HCT116 (cell line): ENCODE measurements at regions of chr9 and their contacts with region 1.

Region 1: DNA sequence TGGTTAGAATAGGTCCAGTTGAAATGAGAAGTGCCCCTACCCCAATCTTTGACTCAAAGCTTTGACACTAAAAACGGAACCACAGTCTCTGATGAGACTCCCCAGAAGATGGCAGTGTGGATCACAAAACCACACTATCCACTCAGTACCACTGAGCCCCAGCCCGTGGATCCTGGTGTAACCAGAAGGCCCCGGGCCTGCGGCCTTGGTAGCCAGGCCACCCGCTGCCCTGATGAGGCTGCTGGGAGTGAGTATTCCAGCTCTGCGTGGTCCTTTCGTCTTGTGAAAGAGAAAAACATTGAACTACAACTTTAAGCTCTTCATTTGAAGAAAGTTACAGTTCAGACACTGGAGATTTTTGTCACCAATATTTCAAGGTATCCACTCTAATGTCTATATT is 42.2 kb upstream of the FBP1 start:
- DNase-seq: peak; percentile 54
- ATAC-seq: peak; percentile 99
- H3K4me3 ChIP-seq: no peak overlapping the region
- H3K27ac ChIP-seq: no peak overlapping the region
- H3K4me1 ChIP-seq: no peaks in the 10 kb centered on the region
- H3K27me3 ChIP-seq: peaks cover 16% of the 10 kb centered on the region; the same call in 1 of the 2 replicates
- CTCF ChIP-seq: peak; percentile 57 to 77 (median 76)
- POLR2A ChIP-seq: no peak
- RAD21 ChIP-seq: peak; percentile 90

Region 2: GRCh38 chr9:94668418-94668932 is 13.0 kb before region 1 on chr9:
- CTCF ChIA-PET with region 1: interaction called, 22 read pairs
- POLR2A ChIA-PET with region 1: interaction called, 9 read pairs
- RAD21 ChIA-PET with region 1: interaction called, 3 to 9 read pairs
- intact Hi-C with region 1: no loop called
- DNase-seq: no peak
- ATAC-seq: peak; percentile 37
- H3K4me3 ChIP-seq: peak overlapping the region; percentile 41 to 70; a peak in 2 of 4 replicates
- H3K27ac ChIP-seq: no peak overlapping the region
- H3K4me1 ChIP-seq: peaks cover 5 to 17% of the 10 kb centered on the region in 2 experiments
- H3K27me3 ChIP-seq: no peaks in the 10 kb centered on the region
- CTCF ChIP-seq: no peak
- POLR2A ChIP-seq: no peak
- RAD21 ChIP-seq: no peak